Left ventricle myocardium superior (tissue), 1 donor: ENCODE measurements at regions of chr22 and their contacts with region 1.

Region 1: GRCh38 chr22:36977947-36978660 is 41.1 kb downstream of the TST start:
- DNase-seq: peak; percentile 92
- ATAC-seq: peak; percentile 98

Region 2: DNA sequence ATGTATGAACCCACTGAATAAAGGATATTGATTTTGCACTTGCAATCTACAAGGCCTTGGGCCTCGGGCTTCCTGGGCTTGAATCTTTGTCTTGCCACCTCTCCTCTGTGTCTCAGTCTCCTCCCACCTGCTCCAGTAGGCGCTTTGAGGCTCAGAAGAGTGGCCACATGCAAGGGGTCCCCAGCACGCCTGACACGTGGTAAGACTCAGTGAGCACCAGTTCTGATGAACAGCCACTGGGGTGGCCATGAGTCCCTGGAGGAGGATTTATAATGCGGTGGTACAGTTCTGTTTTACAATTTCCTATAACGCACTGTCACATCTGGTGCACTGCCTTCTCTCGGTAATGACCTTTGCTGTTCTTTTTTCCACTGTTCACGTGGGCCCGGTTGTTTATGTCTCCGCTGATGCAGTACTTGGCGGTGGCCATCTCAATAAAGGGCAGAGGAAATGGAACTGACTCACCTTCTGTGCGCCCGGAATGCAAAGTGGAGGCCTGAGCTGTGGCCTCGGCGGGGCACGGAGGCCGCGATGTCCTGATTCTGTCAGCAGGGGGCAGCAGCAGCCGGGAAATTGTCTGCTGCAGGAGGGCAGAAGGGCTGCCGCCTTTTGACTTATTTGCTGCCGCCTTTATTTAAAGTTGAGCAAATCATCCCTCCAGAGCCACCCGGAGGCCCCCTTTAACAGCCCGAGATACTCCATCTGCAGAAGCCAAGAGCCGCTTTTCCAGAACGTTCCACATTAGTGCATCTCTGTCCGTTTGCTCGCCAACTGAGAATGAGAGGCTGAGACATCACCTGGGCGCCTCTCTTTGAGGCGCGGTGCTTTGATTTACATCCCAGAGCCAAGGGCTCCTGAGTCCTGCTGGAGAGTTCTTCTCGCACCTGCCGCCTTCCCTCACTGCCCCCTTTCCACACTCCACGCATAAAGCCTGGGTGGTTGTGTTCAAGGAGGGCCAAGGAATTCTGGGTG is 196.2 kb before region 1 on chr22:
- intact Hi-C with region 1: loop called (anchors 10 kb)
- DNase-seq: peak; percentile 84
- ATAC-seq: peak; percentile 92